Thyroid gland (tissue), 4 donors: ENCODE measurements at regions of chr2 and their contacts with region 1.

Region 1: GRCh38 chr2:203814661-203815540 is 52.7 kb upstream of the CTLA4 start:
- DNase-seq: peak; percentile 46 to 47
- H3K4me3 ChIP-seq: no peak overlapping the region
- H3K27ac ChIP-seq: no peak overlapping the region
- H3K4me1 ChIP-seq: peaks cover 0 to 12% of the 10 kb centered on the region in 2 donors
- H3K27me3 ChIP-seq: no peaks in the 10 kb centered on the region
- CTCF ChIP-seq: peak; percentile 48 to 88 (median 80)
- POLR2A ChIP-seq: no peak

Region 2: GRCh38 chr2:203225423-203226039 is 589.4 kb before region 1 on chr2:
- intact Hi-C with region 1: loop called (anchors 10 kb)
- DNase-seq: peak; percentile 13 to 28
- H3K4me3 ChIP-seq: no peak overlapping the region
- H3K27ac ChIP-seq: no peak overlapping the region
- H3K4me1 ChIP-seq: no peaks in the 10 kb centered on the region
- H3K27me3 ChIP-seq: no peaks in the 10 kb centered on the region
- CTCF ChIP-seq: peak; percentile 42 to 84 (median 50)
- POLR2A ChIP-seq: no peak

Region 3: DNA sequence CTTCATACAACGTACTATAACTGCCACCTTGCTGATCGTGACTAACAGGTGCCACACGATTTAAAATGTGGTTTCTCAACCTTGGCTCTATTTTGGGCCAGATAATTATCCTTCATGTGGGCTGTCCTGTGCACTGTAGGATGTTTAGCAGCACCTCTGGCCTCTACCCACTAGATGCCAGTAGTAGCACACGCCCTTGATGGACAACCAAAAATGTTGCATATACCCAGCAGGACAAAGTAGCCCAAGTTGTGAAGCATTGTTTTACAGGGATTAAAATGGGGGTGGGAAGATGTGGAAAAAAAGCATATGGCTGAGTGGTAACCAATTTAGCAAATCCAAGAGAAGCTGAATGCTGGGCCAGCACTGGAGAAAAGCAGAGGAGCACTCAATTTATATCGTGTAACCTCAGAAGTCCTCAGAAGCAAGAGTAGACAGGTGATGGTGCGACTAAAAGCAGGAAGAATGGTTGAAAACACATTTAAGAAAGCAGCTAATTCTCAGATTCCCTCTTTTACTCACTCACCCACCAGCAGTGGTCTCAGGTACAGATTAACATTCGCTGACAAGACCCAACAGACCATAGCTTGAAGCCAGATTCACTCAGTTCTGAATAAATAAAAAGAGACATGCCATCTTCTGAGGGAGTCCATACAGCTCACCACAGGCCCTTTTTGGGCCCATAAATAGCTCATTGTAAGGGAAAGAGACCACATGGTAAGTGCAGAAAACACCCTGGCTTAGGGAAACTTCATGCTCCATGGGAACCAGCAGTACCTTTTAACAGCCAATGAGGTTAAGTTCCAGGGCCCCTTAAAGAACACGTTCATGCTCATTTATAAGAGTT is 330.4 kb before region 1 on chr2:
- intact Hi-C with region 1: loop called (anchors 10 kb)
- DNase-seq: peak; percentile 19 to 30
- H3K4me3 ChIP-seq: no peak overlapping the region
- H3K27ac ChIP-seq: peak overlapping the region in 2 of 3 donors; percentile 43 to 52
- H3K4me1 ChIP-seq: peaks cover 6 to 11% of the 10 kb centered on the region in 2 donors
- H3K27me3 ChIP-seq: no peaks in the 10 kb centered on the region
- CTCF ChIP-seq: peak in 5 of 6 experiments; percentile 19 to 62 (median 54)
- POLR2A ChIP-seq: no peak